ENCODE measurements at regions of chr5 and their contacts with region 1.

Region 1: DNA sequence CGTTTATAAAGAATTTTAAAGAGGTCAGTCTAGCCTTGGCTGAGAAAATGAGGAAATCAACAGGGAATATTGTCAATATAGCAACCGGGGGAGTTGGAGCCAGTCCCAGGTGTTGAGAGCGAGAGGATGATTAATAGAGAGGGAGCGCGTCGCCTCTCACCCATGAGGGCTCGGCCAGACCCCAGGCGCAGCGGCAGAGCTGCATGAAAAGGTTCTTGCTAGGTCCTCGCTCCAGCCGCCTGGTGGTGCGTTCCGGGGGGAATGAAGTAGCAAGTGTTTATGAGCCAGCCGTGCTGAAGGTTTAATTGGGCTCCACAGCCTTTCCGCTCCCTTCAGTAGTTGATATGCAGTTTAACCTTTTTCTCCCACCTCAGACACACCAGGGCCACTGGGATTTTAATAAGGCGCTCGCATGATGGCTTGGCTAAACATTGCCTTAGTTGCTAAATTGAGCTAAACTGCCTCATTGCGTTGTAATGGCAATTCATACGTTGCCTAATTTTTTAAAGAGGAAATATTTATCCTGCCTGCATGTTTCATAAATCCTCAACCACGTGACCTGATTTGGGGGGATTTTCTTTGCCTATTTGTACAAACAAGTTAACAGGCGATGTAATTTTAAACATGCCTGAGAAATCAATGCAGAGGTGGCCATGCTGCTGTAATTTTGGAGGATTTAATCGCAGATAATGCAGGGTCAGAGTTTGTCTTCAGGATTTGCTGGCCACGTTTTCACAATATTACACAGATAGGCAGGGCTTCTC is 167.1 kb upstream of the IRX1 start:
- DNase-seq: no peak
- ATAC-seq: no peak
- H3K4me3 ChIP-seq: no peak overlapping the region
- H3K27ac ChIP-seq: no peak overlapping the region
- H3K4me1 ChIP-seq: no peaks in the 10 kb centered on the region
- H3K27me3 ChIP-seq: peaks cover 0 to 12% (median 3%) of the 10 kb centered on the region in 7 donors
- CTCF ChIP-seq: no peak

Region 2: GRCh38 chr5:3715062-3715461 is 286.5 kb after region 1 on chr5:
- intact Hi-C with region 1: loop called in 1 of 10 experiments (anchors 10 kb)
- DNase-seq: peak in 1 of 2 donors; percentile 24
- ATAC-seq: peak in 1 of 8 donors; percentile 63
- H3K4me3 ChIP-seq: no peak overlapping the region
- H3K27ac ChIP-seq: no peak overlapping the region
- H3K4me1 ChIP-seq: no peaks in the 10 kb centered on the region
- H3K27me3 ChIP-seq: peaks cover 0 to 12% (median 0%) of the 10 kb centered on the region in 7 donors
- CTCF ChIP-seq: no peak

Measured in heart right ventricle (tissue), 16 donors.